ENCODE measurements at regions of chr11 and their contacts with region 1.

Region 1: DNA sequence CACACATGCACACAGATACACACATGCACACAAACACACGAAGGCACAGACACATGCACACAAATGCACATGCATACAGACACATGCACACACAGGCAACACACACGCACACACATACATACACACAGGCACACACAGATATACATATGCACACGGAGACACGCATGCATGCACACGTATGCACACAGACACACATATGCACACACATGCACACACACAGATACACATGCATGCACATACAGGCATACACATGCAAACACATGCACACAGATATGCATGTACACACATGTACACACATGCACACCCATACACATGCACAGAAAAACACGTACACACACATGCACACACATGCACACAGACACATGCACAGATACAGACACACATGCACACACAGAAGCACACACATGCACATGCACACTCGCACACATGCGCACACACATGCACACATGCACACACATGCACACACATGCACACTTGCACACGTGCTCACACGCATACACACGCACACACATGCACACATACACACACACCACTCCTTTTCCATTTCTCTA is 70.8 kb upstream of the ALDH3B2 start:
- DNase-seq: no peak
- H3K4me3 ChIP-seq: no peak overlapping the region
- H3K4me3 Mint-ChIP-seq: no peak overlapping the region
- H3K27ac ChIP-seq: no peak overlapping the region
- H3K27ac Mint-ChIP-seq: no peak overlapping the region
- H3K4me1 ChIP-seq: no peaks in the 10 kb centered on the region
- H3K4me1 Mint-ChIP-seq: no peaks in the 10 kb centered on the region
- H3K27me3 ChIP-seq: no peaks in the 10 kb centered on the region
- H3K27me3 Mint-ChIP-seq: peaks cover 0 to 10% (median 5%) of the 10 kb centered on the region in 3 donors
- CTCF ChIP-seq: no peak

Region 2: DNA sequence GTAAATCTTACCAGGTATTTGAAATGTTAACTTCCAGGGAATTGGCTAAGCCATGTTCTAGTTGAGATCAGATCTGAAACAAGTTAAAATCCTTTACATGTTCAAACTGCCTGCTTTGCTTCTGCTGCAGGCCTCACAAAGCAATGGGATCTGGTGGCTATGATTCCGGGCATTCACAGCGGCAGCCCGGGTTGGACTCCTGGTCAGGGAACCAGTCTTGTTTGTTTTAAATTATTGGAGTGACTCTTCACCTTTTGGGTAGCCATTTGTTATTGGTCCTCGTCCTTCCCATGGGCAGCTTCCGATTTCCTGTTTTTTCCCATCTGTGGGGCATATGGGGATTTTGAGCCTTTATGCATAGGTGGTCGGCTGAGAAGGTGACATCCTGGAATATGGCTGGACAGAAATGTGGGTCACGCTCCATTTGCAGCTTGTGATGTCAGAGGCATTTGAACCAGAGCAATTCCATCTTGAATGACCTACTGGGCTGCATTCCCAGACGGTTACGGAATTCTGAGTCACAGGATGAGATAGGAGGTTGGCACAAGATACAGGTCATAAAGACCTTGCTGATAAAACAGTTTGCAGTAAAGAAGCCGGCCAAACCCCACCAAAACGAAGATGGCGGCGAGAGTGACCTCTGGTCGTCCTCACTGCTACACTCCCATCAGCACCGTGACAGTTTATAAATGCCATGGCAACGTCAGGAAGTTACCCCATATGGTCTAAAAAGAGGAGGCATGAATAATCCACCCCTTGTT is 181.7 kb before region 1 on chr11:
- intact Hi-C with region 1: no loop called
- DNase-seq: no peak
- H3K4me3 ChIP-seq: no peak overlapping the region
- H3K4me3 Mint-ChIP-seq: no peak overlapping the region
- H3K27ac ChIP-seq: no peak overlapping the region
- H3K27ac Mint-ChIP-seq: no peak overlapping the region
- H3K4me1 ChIP-seq: no peaks in the 10 kb centered on the region
- H3K4me1 Mint-ChIP-seq: no peaks in the 10 kb centered on the region
- H3K27me3 ChIP-seq: no peaks in the 10 kb centered on the region
- H3K27me3 Mint-ChIP-seq: peaks cover 9 to 13% (median 10%) of the 10 kb centered on the region in 3 donors
- CTCF ChIP-seq: no peak

Region 3: GRCh38 chr11:67698247-67698646 is 47.0 kb before region 1 on chr11:
- intact Hi-C with region 1: loop called in 1 of 2 experiments (anchors 10 kb)
- DNase-seq: no peak
- H3K4me3 ChIP-seq: no peak overlapping the region
- H3K4me3 Mint-ChIP-seq: no peak overlapping the region
- H3K27ac ChIP-seq: no peak overlapping the region
- H3K27ac Mint-ChIP-seq: no peak overlapping the region
- H3K4me1 ChIP-seq: no peaks in the 10 kb centered on the region
- H3K4me1 Mint-ChIP-seq: no peaks in the 10 kb centered on the region
- H3K27me3 ChIP-seq: no peaks in the 10 kb centered on the region
- H3K27me3 Mint-ChIP-seq: peaks cover 1 to 6% (median 3%) of the 10 kb centered on the region in 3 donors
- CTCF ChIP-seq: no peak

Region 4: GRCh38 chr11:68010090-68011041 is 265.1 kb after region 1 on chr11 and contains the start of gene ALDH3B1:
- intact Hi-C with region 1: no loop called
- DNase-seq: peak; percentile 83 to 90 (median 87)
- H3K4me3 ChIP-seq: peak within 1 kb of the TSS; percentile 52 to 89 (median 60)
- H3K4me3 Mint-ChIP-seq: peak within 1 kb of the TSS; percentile 83 to 92
- H3K27ac ChIP-seq: peak within 1 kb of the TSS; percentile 90 to 94
- H3K27ac Mint-ChIP-seq: peak within 1 kb of the TSS; percentile 91 to 97 (median 95)
- H3K4me1 ChIP-seq: peaks cover 76 to 85% of the 10 kb centered on the region in 2 donors
- H3K4me1 Mint-ChIP-seq: peaks cover 74% of the 10 kb centered on the region
- H3K27me3 ChIP-seq: no peaks in the 10 kb centered on the region
- H3K27me3 Mint-ChIP-seq: peaks cover 0 to 1% (median 0%) of the 10 kb centered on the region in 3 donors
- CTCF ChIP-seq: no peak
- polyA plus RNA-seq, gene ALDH3B1: 79.8 to 89.1 (median 86.7) TPM